ENCODE measurements at regions of chr2 and their contacts with region 1.

Region 1: DNA sequence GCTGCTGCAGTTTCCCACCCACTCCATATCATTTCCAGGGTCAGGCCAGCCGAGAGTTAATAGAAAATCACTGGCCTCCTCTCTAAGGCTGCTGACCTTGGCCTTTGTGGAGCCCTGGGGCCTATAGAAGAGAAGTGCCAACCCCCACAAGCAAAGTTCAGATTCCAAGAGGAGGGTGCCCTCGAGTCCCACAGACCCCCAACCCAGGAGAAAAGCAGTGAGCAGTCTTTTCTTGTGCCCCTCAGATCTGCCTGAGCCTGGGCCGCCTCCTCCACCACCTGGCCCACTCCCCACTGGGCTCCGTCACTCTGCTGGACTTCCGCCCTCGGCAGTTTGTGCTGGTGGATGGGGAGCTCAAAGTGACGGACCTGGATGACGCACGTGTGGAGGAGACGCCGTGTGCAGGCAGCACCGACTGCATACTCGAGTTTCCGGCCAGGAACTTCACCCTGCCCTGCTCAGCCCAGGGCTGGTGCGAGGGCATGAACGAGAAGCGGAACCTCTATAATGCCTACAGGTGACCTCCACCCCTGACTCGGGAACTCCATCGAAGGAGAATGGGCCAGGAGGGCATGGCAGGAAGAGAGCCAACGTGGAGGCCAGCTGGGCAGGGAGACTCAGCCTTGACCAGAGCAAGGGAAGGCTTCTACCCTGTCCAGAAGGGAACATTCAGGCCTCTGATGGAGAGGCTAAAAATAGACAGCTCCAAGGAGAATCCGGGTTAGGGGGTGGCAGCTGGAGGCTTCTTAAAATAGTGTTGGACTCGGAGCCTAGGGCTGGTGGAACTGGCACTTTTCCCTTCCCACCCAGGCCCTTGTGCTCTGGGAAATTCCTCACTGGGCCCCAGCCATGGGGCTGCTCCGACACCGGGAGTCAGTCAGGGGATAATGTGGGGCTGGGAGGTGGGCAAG is 6.2 kb downstream of the PKDCC start:
- DNase-seq: peak; percentile 84 to 88
- ATAC-seq: peak; percentile 81
- H3K4me3 ChIP-seq: no peak overlapping the region
- H3K27ac ChIP-seq: peak overlapping the region; percentile 79 to 91
- H3K4me1 ChIP-seq: peaks cover 3 to 6% of the 10 kb centered on the region in 2 donors
- H3K27me3 ChIP-seq: no peaks in the 10 kb centered on the region

Region 2: DNA sequence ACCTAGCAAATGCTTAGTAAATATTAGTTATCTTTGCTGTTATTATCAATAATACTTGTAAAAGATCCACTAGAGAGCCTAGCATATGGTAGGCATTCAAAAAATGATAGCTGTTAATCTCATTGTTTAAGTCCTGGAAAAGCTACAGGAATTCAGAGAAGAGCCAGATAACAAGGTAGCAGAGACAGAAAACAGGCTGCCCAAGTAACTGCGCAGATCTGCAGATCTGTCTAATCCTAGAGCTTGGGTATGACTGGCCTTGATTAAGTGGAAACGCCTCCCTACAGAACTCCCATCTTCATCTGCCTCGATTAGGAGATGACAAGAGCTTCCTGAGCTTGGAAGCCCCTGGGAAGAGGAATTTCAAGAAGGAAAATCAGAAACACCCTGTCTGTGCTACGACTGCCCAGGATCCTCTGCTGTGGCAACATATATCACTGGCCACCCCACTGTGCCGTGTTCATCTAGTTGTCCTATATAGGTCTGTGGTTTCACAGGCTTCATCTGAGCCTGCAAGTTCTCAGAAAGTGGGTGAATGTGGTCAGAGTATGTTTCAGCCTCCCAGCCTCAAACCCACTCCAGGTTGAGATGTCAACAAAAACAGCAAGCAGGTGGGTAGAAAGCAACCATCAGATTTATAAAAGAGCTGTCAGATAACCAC is 157.7 kb before region 1 on chr2:
- intact Hi-C with region 1: loop called (anchors 2 to 10 kb)
- DNase-seq: no peak
- ATAC-seq: no peak
- H3K4me3 ChIP-seq: no peak overlapping the region
- H3K27ac ChIP-seq: peak overlapping the region in 1 of 2 donors; percentile 42
- H3K4me1 ChIP-seq: peaks cover 5 to 9% of the 10 kb centered on the region in 2 donors
- H3K27me3 ChIP-seq: no peaks in the 10 kb centered on the region

Region 3: GRCh38 chr2:41998186-41999127 is 55.6 kb before region 1 on chr2:
- intact Hi-C with region 1: loop called in 1 of 2 experiments (anchors 5 kb)
- DNase-seq: peak in 1 of 2 donors; percentile 53
- ATAC-seq: peak; percentile 71
- H3K4me3 ChIP-seq: no peak overlapping the region
- H3K27ac ChIP-seq: peak overlapping the region; percentile 4 to 26
- H3K4me1 ChIP-seq: peaks cover 0 to 4% of the 10 kb centered on the region in 2 donors
- H3K27me3 ChIP-seq: no peaks in the 10 kb centered on the region

Region 4: GRCh38 chr2:42095923-42096408 is 41.9 kb after region 1 on chr2:
- intact Hi-C with region 1: no loop called
- DNase-seq: peak; percentile 81 to 90
- ATAC-seq: peak; percentile 70
- H3K4me3 ChIP-seq: no peak overlapping the region
- H3K27ac ChIP-seq: no peak overlapping the region
- H3K4me1 ChIP-seq: no peaks in the 10 kb centered on the region
- H3K27me3 ChIP-seq: no peaks in the 10 kb centered on the region